ENCODE measurements at regions of chr9 and their contacts with region 1.

Region 1: GRCh38 chr9:75200892-75201470 is 112.7 kb downstream of the OSTF1 start:
- DNase-seq: no peak
- H3K4me3 ChIP-seq: no peak overlapping the region
- H3K27ac ChIP-seq: no peak overlapping the region
- H3K4me1 ChIP-seq: no peaks in the 10 kb centered on the region
- H3K27me3 ChIP-seq: no peaks in the 10 kb centered on the region
- CTCF ChIP-seq: peak in 2 of 3 experiments; percentile 42 to 44; a peak in 2 of 4 replicates
- EP300 ChIP-seq: no peak
- POLR2A ChIP-seq: no peak
- RAD21 ChIP-seq: peak; percentile 79 to 83

Region 2: GRCh38 chr9:75071530-75072124 is 129.4 kb before region 1 on chr9:
- CTCF ChIA-PET with region 1: no interaction called
- POLR2A ChIA-PET with region 1: no interaction called
- DNase-seq: no peak
- H3K4me3 ChIP-seq: no peak overlapping the region
- H3K27ac ChIP-seq: no peak overlapping the region
- H3K4me1 ChIP-seq: peaks cover 0 to 3% (median 0%) of the 10 kb centered on the region in 4 experiments; a peak in 2 of 7 replicates
- H3K27me3 ChIP-seq: no peaks in the 10 kb centered on the region
- CTCF ChIP-seq: no peak
- EP300 ChIP-seq: no peak
- POLR2A ChIP-seq: no peak
- RAD21 ChIP-seq: no peak

Region 3: DNA sequence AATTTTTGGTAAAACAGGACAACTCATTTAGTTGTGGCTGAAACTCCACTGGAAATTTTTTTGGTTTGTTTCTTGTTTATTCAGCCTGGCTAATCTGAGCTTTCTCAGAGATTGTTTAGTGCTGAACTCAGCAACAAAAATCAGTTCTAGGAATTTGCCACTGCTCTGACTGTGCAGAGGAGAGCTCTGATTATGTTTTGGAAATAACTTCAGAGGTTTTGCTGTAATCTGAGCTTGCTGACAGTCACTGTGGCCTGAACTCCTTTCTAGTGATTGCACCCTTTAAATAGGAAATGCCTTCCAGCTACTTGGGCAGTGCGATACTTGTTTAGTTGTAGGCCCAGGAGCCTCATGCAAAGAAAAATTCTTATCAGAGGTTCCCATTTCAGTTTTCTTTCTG is 52.4 kb before region 1 on chr9:
- CTCF ChIA-PET with region 1: no interaction called
- POLR2A ChIA-PET with region 1: no interaction called
- DNase-seq: no peak
- H3K4me3 ChIP-seq: no peak overlapping the region
- H3K27ac ChIP-seq: no peak overlapping the region
- H3K4me1 ChIP-seq: 0 out of 7 replicates have a peak, but pooled peaks cover 0 to 2% (median 0%) of the 10 kb centered on the region in 4 experiments
- H3K27me3 ChIP-seq: no peaks in the 10 kb centered on the region
- CTCF ChIP-seq: no peak
- EP300 ChIP-seq: no peak
- POLR2A ChIP-seq: no peak
- RAD21 ChIP-seq: no peak

Region 4: GRCh38 chr9:75185585-75186170 is 15.3 kb before region 1 on chr9:
- CTCF ChIA-PET with region 1: interaction called, 34 read pairs
- POLR2A ChIA-PET with region 1: no interaction called
- DNase-seq: peak in 1 of 2 experiments; percentile 68
- H3K4me3 ChIP-seq: no peak overlapping the region
- H3K27ac ChIP-seq: no peak overlapping the region
- H3K4me1 ChIP-seq: no peaks in the 10 kb centered on the region
- H3K27me3 ChIP-seq: no peaks in the 10 kb centered on the region
- CTCF ChIP-seq: peak; percentile 73 to 78 (median 78)
- EP300 ChIP-seq: no peak
- POLR2A ChIP-seq: no peak
- RAD21 ChIP-seq: peak; percentile 44 to 59

Region 5: GRCh38 chr9:75238311-75238978 is 37.5 kb after region 1 on chr9:
- CTCF ChIA-PET with region 1: interaction called, 30 read pairs
- POLR2A ChIA-PET with region 1: no interaction called
- DNase-seq: peak; percentile 33 to 51
- H3K4me3 ChIP-seq: no peak overlapping the region
- H3K27ac ChIP-seq: no peak overlapping the region
- H3K4me1 ChIP-seq: no peaks in the 10 kb centered on the region
- H3K27me3 ChIP-seq: no peaks in the 10 kb centered on the region
- CTCF ChIP-seq: peak; percentile 9 to 80 (median 63)
- EP300 ChIP-seq: no peak
- POLR2A ChIP-seq: no peak
- RAD21 ChIP-seq: peak; percentile 72 to 78

Region 6: DNA sequence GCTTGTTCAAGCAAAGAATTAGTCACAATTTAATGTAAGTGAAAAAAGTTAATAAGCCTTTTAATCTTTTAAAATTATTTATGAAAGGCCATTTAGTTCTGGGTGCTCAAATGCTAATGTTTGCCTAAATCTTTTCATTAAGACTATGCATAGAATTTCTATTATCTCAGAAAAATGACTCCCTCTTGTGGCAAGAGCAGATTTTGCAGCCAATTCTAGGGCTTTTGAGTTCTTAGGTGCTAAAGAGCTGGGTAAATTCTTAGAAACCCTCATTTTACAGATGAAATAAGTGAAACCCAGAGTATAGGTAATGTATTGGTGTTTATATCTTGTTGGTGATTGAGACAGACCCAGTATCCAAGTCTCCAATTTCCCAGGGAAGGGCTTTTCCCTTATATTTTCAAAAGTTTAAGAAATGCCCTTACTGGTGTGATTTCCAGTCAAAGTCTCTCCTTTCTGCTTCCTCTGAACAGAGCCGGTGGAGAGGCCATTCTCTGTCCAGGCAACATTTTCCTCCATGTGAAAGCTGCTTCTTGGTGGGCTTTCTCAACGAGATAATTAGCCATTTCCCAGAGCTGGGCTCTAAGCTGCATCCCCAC is 665.4 kb after region 1 on chr9:
- CTCF ChIA-PET with region 1: interaction called, 10 read pairs
- POLR2A ChIA-PET with region 1: no interaction called
- DNase-seq: peak in 1 of 2 experiments; percentile 64
- H3K4me3 ChIP-seq: no peak overlapping the region
- H3K27ac ChIP-seq: no peak overlapping the region
- H3K4me1 ChIP-seq: no peaks in the 10 kb centered on the region
- H3K27me3 ChIP-seq: no peaks in the 10 kb centered on the region
- CTCF ChIP-seq: peak in 2 of 3 experiments; percentile 50 to 58; a peak in 2 of 4 replicates
- EP300 ChIP-seq: no peak
- POLR2A ChIP-seq: no peak
- RAD21 ChIP-seq: peak; percentile 60 to 64

Measured in H1 (cell line).